ENCODE measurements at regions of chr19 and their contacts with region 1.

Region 1: DNA sequence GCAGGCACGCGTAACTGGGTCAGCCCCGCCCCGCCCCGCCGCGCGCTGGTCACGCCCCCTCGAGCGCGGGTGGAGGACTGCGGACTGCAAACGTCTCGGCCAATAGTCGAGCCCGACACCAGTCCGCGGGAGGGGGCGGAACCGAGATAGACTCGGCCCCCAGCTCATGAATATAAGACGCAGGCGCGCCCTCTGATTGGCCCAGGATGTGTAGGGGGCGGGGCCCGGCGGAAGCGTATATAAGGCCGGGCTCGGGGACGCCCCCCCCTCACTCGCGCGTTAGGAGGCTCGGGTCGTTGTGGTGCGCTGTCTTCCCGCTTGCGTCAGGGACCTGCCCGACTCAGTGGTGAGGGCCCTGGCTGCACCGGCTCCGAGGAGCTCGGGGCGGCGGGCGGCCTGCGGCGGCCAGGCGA is at the start of gene CIRBP:
- DNase-seq: peak; percentile 100
- ATAC-seq: peak; percentile 73
- total RNA-seq, gene CIRBP: 219 TPM

Region 2: GRCh38 chr19:1239798-1240737 is 29.0 kb before region 1 on chr19:
- intact Hi-C with region 1: loop called (anchors 2 kb)
- DNase-seq: peak; percentile 93
- ATAC-seq: peak; percentile 55